Spleen (tissue), 13 donors: ENCODE measurements at regions of chr7 and their contacts with region 1.

Region 1: DNA sequence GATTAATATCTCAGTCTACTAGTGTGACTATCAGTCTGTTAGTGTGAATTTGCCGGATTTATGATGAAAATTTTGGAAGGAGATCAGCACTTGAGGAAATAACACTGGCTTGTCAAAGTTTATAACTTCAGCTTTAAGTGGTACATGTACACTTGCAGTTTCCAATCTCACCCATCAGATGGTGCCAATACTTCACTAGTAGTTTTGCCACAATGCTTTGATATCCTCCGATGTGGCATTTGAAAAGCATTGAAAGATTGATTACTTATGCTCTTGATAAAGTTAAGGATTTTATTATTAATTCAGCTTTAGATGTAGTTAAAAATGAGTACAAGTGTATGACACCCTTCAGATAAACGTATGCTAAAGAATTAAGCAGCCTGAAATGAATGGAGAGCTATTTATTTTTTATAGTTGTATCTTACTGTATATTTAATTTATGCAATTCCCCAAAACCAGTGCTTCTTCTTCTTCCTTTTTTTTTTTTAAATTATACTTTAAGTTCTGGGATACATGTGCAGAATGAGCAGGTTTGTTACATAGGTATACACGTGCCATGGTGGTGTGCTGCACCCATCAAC is 98.2 kb downstream of the ANLN start:
- DNase-seq: no peak
- H3K4me3 ChIP-seq: no peak overlapping the region
- H3K27ac ChIP-seq: no peak overlapping the region
- H3K4me1 ChIP-seq: no peaks in the 10 kb centered on the region
- H3K27me3 ChIP-seq: no peaks in the 10 kb centered on the region
- CTCF ChIP-seq: peak; percentile 32 to 82 (median 74)
- POLR2A ChIP-seq: no peak

Region 2: GRCh38 chr7:36264123-36264801 is 223.6 kb before region 1 on chr7:
- intact Hi-C with region 1: no loop called
- DNase-seq: no peak
- H3K4me3 ChIP-seq: peak overlapping the region in 1 of 8 donors; percentile 32
- H3K27ac ChIP-seq: peak overlapping the region; percentile 38 to 91 (median 78)
- H3K4me1 ChIP-seq: peaks cover 22 to 67% (median 49%) of the 10 kb centered on the region in 6 donors
- H3K27me3 ChIP-seq: no peaks in the 10 kb centered on the region
- CTCF ChIP-seq: no peak
- POLR2A ChIP-seq: no peak

Region 3: GRCh38 chr7:36670585-36671431 is 183.0 kb after region 1 on chr7:
- intact Hi-C with region 1: loop called (anchors 5 kb)
- DNase-seq: no peak
- H3K4me3 ChIP-seq: no peak overlapping the region
- H3K27ac ChIP-seq: peak overlapping the region in 2 of 8 donors; percentile 3 to 34
- H3K4me1 ChIP-seq: peaks cover 0 to 38% (median 0%) of the 10 kb centered on the region in 6 donors
- H3K27me3 ChIP-seq: no peaks in the 10 kb centered on the region
- CTCF ChIP-seq: peak; percentile 66 to 94 (median 81)
- POLR2A ChIP-seq: no peak